ENCODE measurements at regions of chr18 and their contacts with region 1.

Region 1: DNA sequence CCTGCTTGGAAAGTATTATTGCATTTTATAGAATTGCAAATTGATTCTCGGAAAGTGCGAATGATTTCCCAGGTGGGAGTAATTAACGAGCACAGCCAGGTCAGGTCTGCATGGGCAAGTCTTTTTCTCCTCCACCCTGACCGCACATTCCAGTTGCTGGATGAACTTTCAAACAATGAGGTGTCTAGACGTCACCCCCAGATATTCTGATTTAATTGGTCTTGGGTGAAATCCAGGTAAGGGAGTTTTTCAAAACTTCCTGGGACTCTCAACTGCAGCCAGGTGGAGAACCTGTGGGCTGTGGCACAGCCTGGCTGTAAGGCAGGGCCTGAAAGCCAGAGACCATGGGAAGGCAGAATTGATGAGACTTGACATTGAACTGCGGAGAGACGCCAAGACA is 15.9 kb upstream of the RNF152 start:
- DNase-seq: no peak
- ATAC-seq: no peak
- H3K4me3 ChIP-seq: no peak overlapping the region
- H3K27ac ChIP-seq: no peak overlapping the region
- H3K4me1 ChIP-seq: no peaks in the 10 kb centered on the region
- H3K27me3 ChIP-seq: peaks cover 0 to 6% (median 0%) of the 10 kb centered on the region in 9 donors
- CTCF ChIP-seq: no peak
- POLR2A ChIP-seq: no peak

Region 2: GRCh38 chr18:61616111-61616610 is 292.5 kb before region 1 on chr18:
- intact Hi-C with region 1: loop called in 1 of 10 experiments (anchors 5 kb)
- DNase-seq: no peak
- ATAC-seq: no peak
- H3K4me3 ChIP-seq: no peak overlapping the region
- H3K27ac ChIP-seq: no peak overlapping the region
- H3K4me1 ChIP-seq: no peaks in the 10 kb centered on the region
- H3K27me3 ChIP-seq: no peaks in the 10 kb centered on the region
- CTCF ChIP-seq: no peak
- POLR2A ChIP-seq: no peak

Region 3: DNA sequence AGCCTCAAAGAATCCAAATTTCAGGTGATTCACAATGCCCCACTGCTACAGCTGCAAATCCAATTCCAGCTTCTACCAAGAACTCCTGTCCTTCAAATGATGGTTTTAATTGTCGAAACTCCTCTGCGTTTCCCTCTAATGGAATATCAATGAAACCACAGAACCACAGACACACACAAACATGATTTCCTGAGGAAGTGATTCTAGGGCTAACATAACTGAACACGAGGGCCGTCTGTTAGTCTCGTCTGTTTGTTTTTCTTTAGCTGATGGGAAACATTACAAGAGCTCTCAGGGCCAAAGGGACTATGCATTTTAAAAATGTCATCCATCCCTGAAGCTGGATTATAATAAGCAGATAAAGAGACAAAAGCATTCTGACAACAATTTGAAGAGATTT is 75.3 kb before region 1 on chr18:
- intact Hi-C with region 1: no loop called
- DNase-seq: no peak
- ATAC-seq: peak in 3 of 4 donors; percentile 44 to 79 (median 51)
- H3K4me3 ChIP-seq: peak overlapping the region in 3 of 12 donors; percentile 1 to 18 (median 15)
- H3K27ac ChIP-seq: peak overlapping the region in 9 of 12 donors; percentile 13 to 71 (median 49)
- H3K4me1 ChIP-seq: peaks cover 0 to 68% (median 36%) of the 10 kb centered on the region in 12 donors
- H3K27me3 ChIP-seq: peaks cover 0 to 34% (median 0%) of the 10 kb centered on the region in 9 donors
- CTCF ChIP-seq: no peak
- POLR2A ChIP-seq: no peak